PC-3 (cell line): ENCODE measurements at regions of chr17 and their contacts with region 1.

Region 1: GRCh38 chr17:72397687-72398086 is 276.9 kb downstream of the SOX9 start:
- DNase-seq: peak; percentile 94
- ATAC-seq: peak; percentile 27
- H3K4me3 ChIP-seq: peak overlapping the region; percentile 3; the same call in 1 of the 2 replicates
- H3K27ac ChIP-seq: peak overlapping the region; percentile 97
- H3K4me1 ChIP-seq: peaks cover 76% of the 10 kb centered on the region
- H3K27me3 ChIP-seq: no peaks in the 10 kb centered on the region
- CTCF ChIP-seq: no peak

Region 2: GRCh38 chr17:71809537-71809936 is 588.1 kb before region 1 on chr17:
- CTCF ChIA-PET with region 1: no interaction called
- POLR2A ChIA-PET with region 1: no interaction called
- intact Hi-C with region 1: no loop called
- DNase-seq: peak; percentile 59
- ATAC-seq: peak; percentile 87
- H3K4me3 ChIP-seq: no peak overlapping the region
- H3K27ac ChIP-seq: 0 out of 2 replicates have a peak overlapping the region, but pooled peaks have one; percentile 3
- H3K4me1 ChIP-seq: peaks cover 21% of the 10 kb centered on the region
- H3K27me3 ChIP-seq: no peaks in the 10 kb centered on the region
- CTCF ChIP-seq: no peak

Region 3: DNA sequence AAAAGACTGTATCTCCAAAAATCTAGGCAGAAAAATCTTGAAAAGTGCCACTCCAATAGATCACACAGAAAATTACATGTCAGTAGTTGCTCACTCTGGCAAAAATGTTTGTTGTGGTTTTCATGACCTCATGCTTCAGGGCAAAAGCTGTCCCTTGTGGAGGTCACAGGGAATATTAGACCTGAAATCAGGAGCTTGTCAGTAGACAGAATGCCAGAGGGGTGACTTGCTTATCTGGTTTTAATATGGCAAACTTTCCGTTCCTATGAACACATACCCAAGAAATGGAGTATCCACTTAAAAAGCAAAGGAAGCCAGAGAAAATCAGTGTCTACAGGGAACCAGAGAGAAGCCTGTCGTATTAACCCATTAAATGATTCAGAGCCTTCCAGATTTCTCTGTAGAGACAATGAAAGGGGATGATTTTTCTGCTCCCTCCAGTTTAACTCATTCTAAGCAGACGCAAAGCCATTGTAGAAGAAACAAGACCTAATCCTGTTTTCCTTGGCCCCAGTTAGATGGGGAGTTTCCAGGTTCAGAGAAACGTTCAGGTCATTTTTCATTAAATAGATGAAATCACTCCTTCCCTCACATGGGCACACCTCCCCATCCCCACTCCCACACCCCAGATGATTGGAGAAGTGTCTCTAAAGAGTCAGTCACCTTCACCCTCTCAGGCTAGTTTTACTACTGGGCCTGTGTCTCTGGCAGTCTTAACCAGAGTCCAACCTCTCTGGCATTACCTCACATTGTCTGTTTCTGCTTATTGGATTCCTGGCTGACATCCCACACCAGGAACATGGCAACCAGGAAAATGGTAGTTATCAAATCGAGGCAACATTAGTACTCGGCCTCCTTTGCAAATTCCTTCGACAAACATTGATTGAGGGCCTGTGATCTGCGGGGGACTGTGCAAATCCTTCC is 270.9 kb before region 1 on chr17:
- CTCF ChIA-PET with region 1: no interaction called
- POLR2A ChIA-PET with region 1: interaction called, 6 read pairs
- intact Hi-C with region 1: loop called (anchors 1 kb)
- DNase-seq: peak; percentile 91
- ATAC-seq: peak; percentile 44
- H3K4me3 ChIP-seq: no peak overlapping the region
- H3K27ac ChIP-seq: peak overlapping the region; percentile 66
- H3K4me1 ChIP-seq: peaks cover 39% of the 10 kb centered on the region
- H3K27me3 ChIP-seq: no peaks in the 10 kb centered on the region
- CTCF ChIP-seq: 0 out of 2 replicates have a peak, but pooled peaks have one; percentile 15

Region 4: GRCh38 chr17:72338847-72339790 is 58.6 kb before region 1 on chr17:
- CTCF ChIA-PET with region 1: no interaction called
- POLR2A ChIA-PET with region 1: no interaction called
- intact Hi-C with region 1: loop called (anchors 2 kb)
- DNase-seq: peak; percentile 97
- ATAC-seq: peak; percentile 93
- H3K4me3 ChIP-seq: peak overlapping the region; percentile 22; the same call in 1 of the 2 replicates
- H3K27ac ChIP-seq: peak overlapping the region; percentile 84
- H3K4me1 ChIP-seq: peaks cover 26% of the 10 kb centered on the region
- H3K27me3 ChIP-seq: no peaks in the 10 kb centered on the region
- CTCF ChIP-seq: no peak

Region 5: GRCh38 chr17:72465191-72466024 is 67.7 kb after region 1 on chr17:
- CTCF ChIA-PET with region 1: no interaction called
- POLR2A ChIA-PET with region 1: interaction called, 3 read pairs
- intact Hi-C with region 1: loop called (anchors 1 kb)
- DNase-seq: peak; percentile 99
- ATAC-seq: peak; percentile 89
- H3K4me3 ChIP-seq: peak overlapping the region; percentile 66
- H3K27ac ChIP-seq: peak overlapping the region; percentile 96
- H3K4me1 ChIP-seq: peaks cover 54% of the 10 kb centered on the region
- H3K27me3 ChIP-seq: no peaks in the 10 kb centered on the region
- CTCF ChIP-seq: no peak

Region 6: DNA sequence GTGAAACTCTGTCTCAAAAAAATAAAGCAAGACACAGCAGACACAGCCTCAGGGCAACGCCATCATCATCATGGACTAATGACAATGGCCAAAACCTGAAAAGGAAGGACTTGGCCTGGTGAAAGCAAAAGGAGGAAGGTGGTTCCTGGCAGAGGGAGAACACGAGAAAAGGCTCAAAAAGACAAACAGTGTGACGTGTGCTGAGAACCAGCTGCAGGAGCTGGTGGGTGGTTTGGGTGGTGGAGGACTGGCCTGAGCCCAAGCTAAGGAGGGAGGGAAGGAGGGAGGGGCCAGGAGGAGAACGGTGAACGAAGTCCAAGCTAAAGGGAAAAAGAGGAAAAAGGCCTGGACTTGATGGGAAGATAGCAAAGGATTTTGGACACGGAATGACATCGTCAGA is 609.7 kb after region 1 on chr17:
- CTCF ChIA-PET with region 1: interaction called, 17 read pairs
- POLR2A ChIA-PET with region 1: no interaction called
- intact Hi-C with region 1: no loop called
- DNase-seq: no peak
- ATAC-seq: no peak
- H3K4me3 ChIP-seq: no peak overlapping the region
- H3K27ac ChIP-seq: no peak overlapping the region
- H3K4me1 ChIP-seq: peaks cover 7% of the 10 kb centered on the region
- H3K27me3 ChIP-seq: no peaks in the 10 kb centered on the region
- CTCF ChIP-seq: no peak